ENCODE measurements at regions of chr3 and their contacts with region 1.

Region 1: GRCh38 chr3:123258811-123259420 is 57.2 kb downstream of the SEC22A start:
- DNase-seq: peak; percentile 81
- ATAC-seq: peak; percentile 95
- H3K4me3 ChIP-seq: no peak overlapping the region
- H3K27ac ChIP-seq: no peak overlapping the region
- H3K4me1 ChIP-seq: no peaks in the 10 kb centered on the region
- H3K27me3 ChIP-seq: no peaks in the 10 kb centered on the region
- CTCF ChIP-seq: peak; percentile 91

Region 2: DNA sequence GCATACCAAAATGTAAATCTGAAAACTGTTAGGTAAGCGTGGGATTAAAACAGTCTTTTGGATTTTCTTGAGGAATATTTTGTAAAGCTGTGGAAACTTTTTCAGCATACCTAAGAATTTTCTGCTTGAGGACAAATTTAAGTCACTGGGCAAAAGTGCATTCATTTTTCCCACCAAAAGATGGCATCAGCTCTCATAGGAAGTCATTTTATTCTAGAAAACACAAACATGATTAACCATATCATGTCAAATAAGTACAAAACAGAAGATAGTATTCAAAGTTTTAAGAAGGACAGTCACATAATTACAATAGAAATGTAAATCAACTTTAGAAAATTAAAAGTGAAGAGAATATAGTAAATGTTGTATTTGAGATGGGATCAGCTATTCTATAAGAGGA is 400.5 kb before region 1 on chr3:
- CTCF ChIA-PET with region 1: no interaction called
- POLR2A ChIA-PET with region 1: no interaction called
- intact Hi-C with region 1: loop called (anchors 10 kb)
- DNase-seq: peak; percentile 58
- ATAC-seq: no peak
- H3K4me3 ChIP-seq: no peak overlapping the region
- H3K27ac ChIP-seq: no peak overlapping the region
- H3K4me1 ChIP-seq: no peaks in the 10 kb centered on the region
- H3K27me3 ChIP-seq: no peaks in the 10 kb centered on the region
- CTCF ChIP-seq: peak; percentile 78

Region 3: GRCh38 chr3:122942937-122943827 is 315.7 kb before region 1 on chr3:
- CTCF ChIA-PET with region 1: no interaction called
- POLR2A ChIA-PET with region 1: no interaction called
- intact Hi-C with region 1: loop called (anchors 2 kb)
- DNase-seq: peak; percentile 84
- ATAC-seq: peak; percentile 89
- H3K4me3 ChIP-seq: no peak overlapping the region
- H3K27ac ChIP-seq: no peak overlapping the region
- H3K4me1 ChIP-seq: peaks cover 19% of the 10 kb centered on the region
- H3K27me3 ChIP-seq: no peaks in the 10 kb centered on the region
- CTCF ChIP-seq: peak; percentile 98

Region 4: DNA sequence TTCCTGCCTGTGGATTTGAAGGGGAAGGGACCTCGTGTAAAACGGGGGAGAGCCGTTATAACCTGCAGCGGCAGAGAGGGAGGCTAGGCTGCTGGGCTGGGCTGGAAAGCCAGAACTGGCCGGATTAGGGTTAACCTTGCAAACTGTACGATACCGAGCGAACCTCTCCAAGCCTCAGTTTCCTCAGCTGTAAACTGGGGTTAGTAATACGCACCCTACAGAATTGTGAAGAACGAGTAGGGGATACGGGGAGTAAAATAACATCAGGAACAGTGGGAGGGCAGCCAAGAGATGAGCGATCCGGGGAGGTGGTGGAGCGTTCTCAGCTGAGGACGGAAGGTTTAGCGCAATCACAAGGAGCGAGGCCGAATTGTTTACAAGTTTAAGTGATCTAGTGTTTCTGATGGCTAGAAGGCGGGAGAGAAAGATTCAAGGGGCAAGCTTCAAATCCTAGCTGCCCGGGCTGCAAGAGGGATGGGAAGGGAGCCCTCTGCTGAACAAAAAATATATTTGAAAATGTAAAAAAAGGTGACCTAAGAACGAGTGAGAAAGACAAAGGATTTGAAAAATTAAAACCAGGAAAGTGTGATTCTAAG is 230.6 kb before region 1 on chr3:
- CTCF ChIA-PET with region 1: no interaction called
- POLR2A ChIA-PET with region 1: no interaction called
- intact Hi-C with region 1: loop called (anchors 2 kb)
- DNase-seq: peak; percentile 80
- ATAC-seq: peak; percentile 52
- H3K4me3 ChIP-seq: peak overlapping the region; percentile 75
- H3K27ac ChIP-seq: no peak overlapping the region
- H3K4me1 ChIP-seq: peaks cover 17% of the 10 kb centered on the region
- H3K27me3 ChIP-seq: peaks cover 88% of the 10 kb centered on the region
- CTCF ChIP-seq: peak; percentile 78

Region 5: GRCh38 chr3:123155471-123156011 is 103.4 kb before region 1 on chr3:
- CTCF ChIA-PET with region 1: no interaction called
- POLR2A ChIA-PET with region 1: no interaction called
- intact Hi-C with region 1: loop called (anchors 2 kb)
- DNase-seq: no peak
- ATAC-seq: no peak
- H3K4me3 ChIP-seq: no peak overlapping the region
- H3K27ac ChIP-seq: no peak overlapping the region
- H3K4me1 ChIP-seq: peaks cover 18% of the 10 kb centered on the region
- H3K27me3 ChIP-seq: no peaks in the 10 kb centered on the region
- CTCF ChIP-seq: no peak

Region 6: DNA sequence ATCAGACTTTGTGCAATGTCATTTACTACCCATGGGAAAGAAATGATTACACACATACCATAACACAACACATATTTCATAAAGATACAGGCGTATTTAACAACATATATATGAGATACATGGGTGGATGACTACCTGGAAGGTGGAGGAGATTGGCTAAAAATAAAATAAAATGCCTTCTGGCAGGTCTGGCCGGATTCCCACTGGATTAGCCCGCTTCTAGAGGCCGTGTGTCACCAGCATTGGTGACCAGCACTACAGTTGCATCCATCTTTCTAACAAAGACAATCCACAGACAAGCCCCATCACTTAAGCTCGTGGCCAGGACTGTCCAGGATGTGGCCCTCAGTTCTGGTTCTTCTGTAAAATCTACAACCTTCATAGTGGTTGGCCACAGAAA is 78.1 kb before region 1 on chr3:
- CTCF ChIA-PET with region 1: no interaction called
- POLR2A ChIA-PET with region 1: no interaction called
- intact Hi-C with region 1: no loop called
- DNase-seq: no peak
- ATAC-seq: no peak
- H3K4me3 ChIP-seq: no peak overlapping the region
- H3K27ac ChIP-seq: no peak overlapping the region
- H3K4me1 ChIP-seq: no peaks in the 10 kb centered on the region
- H3K27me3 ChIP-seq: no peaks in the 10 kb centered on the region
- CTCF ChIP-seq: no peak

Region 7: GRCh38 chr3:123282461-123282860 is 23.5 kb after region 1 on chr3:
- CTCF ChIA-PET with region 1: no interaction called
- POLR2A ChIA-PET with region 1: no interaction called
- intact Hi-C with region 1: loop called (anchors 1 kb)
- DNase-seq: no peak
- ATAC-seq: no peak
- H3K4me3 ChIP-seq: no peak overlapping the region
- H3K27ac ChIP-seq: no peak overlapping the region
- H3K4me1 ChIP-seq: peaks cover 13% of the 10 kb centered on the region; the same call in 1 of the 2 replicates
- H3K27me3 ChIP-seq: no peaks in the 10 kb centered on the region
- CTCF ChIP-seq: no peak

Region 8: GRCh38 chr3:123314359-123315270 is 55.7 kb after region 1 on chr3:
- CTCF ChIA-PET with region 1: no interaction called
- POLR2A ChIA-PET with region 1: no interaction called
- intact Hi-C with region 1: no loop called
- DNase-seq: no peak
- ATAC-seq: no peak
- H3K4me3 ChIP-seq: no peak overlapping the region
- H3K27ac ChIP-seq: no peak overlapping the region
- H3K4me1 ChIP-seq: peaks cover 10% of the 10 kb centered on the region
- H3K27me3 ChIP-seq: peaks cover 69% of the 10 kb centered on the region
- CTCF ChIP-seq: no peak

Measured in PC-3 (cell line).